Activated naive CD4-positive, alpha-beta T cell treated with anti-CD3 and anti-CD28 coated beads for 36 hours (primary cell): ENCODE measurements at regions of chr10 and their contacts with region 1.

Region 1: GRCh38 chr10:133124357-133125211 is 35.4 kb upstream of the KNDC1 start:
- DNase-seq: peak; percentile 25
- H3K4me3 Mint-ChIP-seq: no peak overlapping the region
- H3K27ac Mint-ChIP-seq: no peak overlapping the region
- H3K4me1 Mint-ChIP-seq: peaks cover 5% of the 10 kb centered on the region
- H3K27me3 Mint-ChIP-seq: peaks cover 19% of the 10 kb centered on the region

Region 2: DNA sequence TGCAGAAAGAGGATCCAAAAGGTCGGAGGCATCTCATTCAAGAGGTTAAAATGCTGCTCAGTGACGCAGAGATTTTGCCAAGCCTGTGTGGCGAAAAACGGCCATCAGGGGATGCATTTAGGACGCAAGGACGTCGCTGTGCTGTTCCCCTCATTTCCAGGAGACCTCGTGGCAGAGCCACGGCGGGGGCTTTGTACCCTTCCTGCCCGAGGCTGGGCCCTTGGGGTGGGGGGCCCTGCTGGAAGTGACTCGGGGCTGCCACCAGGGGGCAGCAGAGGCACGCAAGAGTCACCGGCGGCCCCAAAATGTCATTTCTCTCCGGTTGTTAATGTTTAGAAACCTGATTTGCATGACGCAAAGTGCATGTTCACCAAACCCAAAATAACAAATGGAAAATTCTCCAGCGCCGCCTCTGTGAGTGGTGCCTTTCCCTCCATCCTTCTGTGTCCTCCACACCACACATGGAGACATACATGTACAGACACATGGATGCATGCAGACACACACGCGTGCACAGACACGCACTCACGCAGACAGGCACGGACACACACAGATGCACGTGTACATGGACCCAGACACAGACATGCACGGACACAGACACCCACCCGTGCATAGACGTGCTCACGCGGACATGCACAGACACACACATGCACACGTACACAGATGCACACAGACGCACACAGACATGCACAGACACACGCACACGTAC is 287.6 kb before region 1 on chr10:
- CTCF ChIA-PET with region 1: no interaction called
- intact Hi-C with region 1: loop called (anchors 2 kb)
- DNase-seq: peak; percentile 56
- H3K4me3 Mint-ChIP-seq: no peak overlapping the region
- H3K27ac Mint-ChIP-seq: no peak overlapping the region
- H3K4me1 Mint-ChIP-seq: no peaks in the 10 kb centered on the region
- H3K27me3 Mint-ChIP-seq: peaks cover 6% of the 10 kb centered on the region

Region 3: DNA sequence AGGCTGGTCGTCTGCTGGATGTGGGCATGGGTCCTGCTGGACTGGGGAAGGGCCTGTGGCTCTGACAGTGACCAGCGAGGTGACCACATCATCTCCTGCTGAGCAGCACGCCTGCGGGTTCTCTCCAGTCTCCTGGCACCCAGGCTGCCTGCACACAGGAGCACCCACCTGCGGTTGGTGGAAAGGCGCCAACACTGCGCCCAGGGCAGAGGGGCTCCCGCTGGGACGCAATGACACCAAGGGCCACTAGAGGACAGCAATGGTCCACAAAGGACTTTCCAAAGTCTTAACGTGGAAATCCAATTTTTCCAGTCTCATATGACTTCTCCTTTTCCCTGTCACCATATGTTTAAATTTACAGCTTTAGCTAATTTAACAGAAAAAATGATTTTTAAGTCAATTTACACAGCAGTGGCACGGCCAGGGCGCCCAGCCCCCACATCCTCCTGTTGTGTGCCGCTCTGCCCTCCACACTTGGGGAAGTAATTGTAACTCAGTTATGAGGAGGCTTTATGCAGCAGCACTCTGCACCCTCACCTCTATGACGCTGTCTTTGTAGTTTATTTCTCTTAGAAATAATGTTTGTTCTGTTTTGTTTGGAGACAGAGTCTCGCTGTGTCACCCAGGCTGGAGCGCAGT is 220.3 kb before region 1 on chr10:
- CTCF ChIA-PET with region 1: interaction called, 18 read pairs
- intact Hi-C with region 1: loop called (anchors 1 kb)
- DNase-seq: peak; percentile 60
- H3K4me3 Mint-ChIP-seq: no peak overlapping the region
- H3K27ac Mint-ChIP-seq: no peak overlapping the region
- H3K4me1 Mint-ChIP-seq: peaks cover 6% of the 10 kb centered on the region
- H3K27me3 Mint-ChIP-seq: peaks cover 5% of the 10 kb centered on the region